Endothelial cell of umbilical vein (primary cell): ENCODE measurements at regions of chr3 and their contacts with region 1.

Region 1: DNA sequence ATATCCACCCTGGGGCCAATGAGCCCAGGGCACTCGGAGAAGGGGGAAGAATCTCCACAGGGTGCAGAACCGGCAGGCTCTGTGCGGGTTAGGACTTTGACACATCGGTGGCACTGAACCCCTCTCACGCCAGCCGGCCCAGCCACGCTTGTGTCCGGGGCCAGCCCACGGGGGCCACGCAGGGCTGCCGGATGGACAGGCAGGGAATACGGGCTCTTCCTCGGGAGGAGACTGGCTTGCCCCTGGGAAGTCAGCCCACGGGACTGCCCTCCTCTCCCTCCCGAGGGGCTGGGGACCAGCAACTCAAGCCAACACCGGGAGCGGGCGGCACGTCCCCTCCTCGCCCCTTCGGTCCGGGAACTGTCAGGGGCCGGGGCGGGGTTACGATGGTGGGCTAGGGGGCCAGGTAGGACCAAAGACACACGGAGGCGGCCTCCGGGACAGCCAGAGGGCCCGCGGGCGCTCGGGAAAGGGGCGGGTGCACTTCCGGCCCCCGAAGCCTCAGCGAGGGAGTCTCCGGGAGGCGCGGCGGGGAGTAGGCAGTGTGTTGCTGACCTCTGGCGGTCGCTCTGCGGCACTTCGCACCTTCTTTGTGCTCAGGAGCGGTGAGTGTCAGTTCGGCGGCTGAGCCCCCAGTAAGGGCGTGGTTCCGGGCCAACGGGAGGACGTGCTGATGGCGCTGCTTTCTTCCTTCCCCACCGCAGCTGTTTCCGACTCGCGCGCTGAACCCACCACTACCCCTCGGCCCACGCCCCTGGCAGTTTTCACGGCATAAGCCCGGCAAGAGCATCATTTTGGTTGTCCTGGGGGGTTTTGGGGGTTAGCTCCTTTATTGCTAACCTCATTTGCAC is 5.1 kb upstream of the CYP8B1 start:
- DNase-seq: peak; percentile 46
- H3K4me3 ChIP-seq: peak overlapping the region; percentile 23 to 40 (median 38)
- H3K27ac ChIP-seq: no peak overlapping the region
- H3K4me1 ChIP-seq: peaks cover 7% of the 10 kb centered on the region
- H3K27me3 ChIP-seq: peaks cover 11 to 16% of the 10 kb centered on the region in 2 experiments
- CTCF ChIP-seq: peak; percentile 88 to 94
- POLR2A ChIP-seq: no peak

Region 2: GRCh38 chr3:42780892-42781700 is 99.7 kb before region 1 on chr3:
- CTCF ChIA-PET with region 1: interaction called, 5 read pairs
- POLR2A ChIA-PET with region 1: no interaction called
- dilution Hi-C with region 1: no loop called
- intact Hi-C with region 1: loop called (anchors 1 kb)
- DNase-seq: peak; percentile 78
- H3K4me3 ChIP-seq: no peak overlapping the region
- H3K27ac ChIP-seq: no peak overlapping the region
- H3K4me1 ChIP-seq: no peaks in the 10 kb centered on the region
- H3K27me3 ChIP-seq: no peaks in the 10 kb centered on the region
- CTCF ChIP-seq: peak; percentile 56 to 64
- POLR2A ChIP-seq: no peak

Region 3: GRCh38 chr3:42795621-42796181 is 85.1 kb before region 1 on chr3:
- CTCF ChIA-PET with region 1: no interaction called
- POLR2A ChIA-PET with region 1: no interaction called
- dilution Hi-C with region 1: no loop called
- intact Hi-C with region 1: no loop called
- DNase-seq: no peak
- H3K4me3 ChIP-seq: no peak overlapping the region
- H3K27ac ChIP-seq: no peak overlapping the region
- H3K4me1 ChIP-seq: no peaks in the 10 kb centered on the region
- H3K27me3 ChIP-seq: no peaks in the 10 kb centered on the region
- CTCF ChIP-seq: no peak
- POLR2A ChIP-seq: no peak